Activated B cell treated with CpG ODN at 0.5 μM for 24 hours (primary cell): ENCODE measurements at regions of chr22 and their contacts with region 1.

Region 1: GRCh38 chr22:37862570-37863325 is 13.5 kb downstream of the EIF3L start:
- DNase-seq: no peak
- ATAC-seq: no peak
- H3K4me3 Mint-ChIP-seq: no peak overlapping the region
- H3K27ac Mint-ChIP-seq: no peak overlapping the region
- H3K4me1 Mint-ChIP-seq: no peaks in the 10 kb centered on the region
- H3K27me3 Mint-ChIP-seq: no peaks in the 10 kb centered on the region
- CTCF ChIP-seq: no peak

Region 2: DNA sequence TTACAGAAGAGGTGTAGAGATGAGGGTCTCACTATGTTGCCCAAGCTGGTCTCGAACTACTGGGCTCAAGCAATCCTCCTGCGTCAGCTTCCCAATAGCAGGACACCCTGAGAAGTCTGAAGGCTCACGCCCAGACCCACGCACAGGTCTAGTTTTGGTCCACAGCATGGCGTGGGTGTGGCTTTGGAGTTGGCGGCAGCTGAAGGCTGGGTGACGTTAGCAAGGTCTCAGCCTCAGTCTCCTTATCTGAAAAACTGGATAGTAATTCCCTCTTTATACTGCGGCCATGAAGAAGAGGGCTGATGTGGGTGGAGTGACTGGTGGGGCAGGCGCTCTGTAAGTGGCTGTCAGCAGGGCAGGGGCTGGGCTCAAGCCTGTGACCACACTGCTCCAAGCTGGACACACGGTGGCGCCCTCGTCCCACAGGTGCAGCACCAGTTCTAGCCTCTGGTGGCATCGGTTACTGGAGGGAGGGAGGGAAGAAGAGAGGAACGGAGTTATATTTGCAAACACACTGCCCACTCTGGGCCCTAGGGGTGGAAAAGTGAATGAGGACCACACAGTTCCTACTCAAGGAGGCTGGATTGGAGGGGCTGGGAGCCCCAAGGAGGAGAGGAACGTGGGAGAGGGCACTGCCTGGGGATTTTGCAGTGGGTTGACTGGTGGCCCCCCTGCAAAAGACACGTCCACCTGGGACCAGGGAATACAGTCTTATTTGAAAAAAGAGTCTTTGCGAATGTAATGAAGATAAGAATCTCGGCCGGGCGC is 324.0 kb before region 1 on chr22:
- CTCF ChIA-PET with region 1: no interaction called
- POLR2A ChIA-PET with region 1: no interaction called
- intact Hi-C with region 1: loop called (anchors 2 kb)
- DNase-seq: peak; percentile 81
- ATAC-seq: peak; percentile 100
- H3K4me3 Mint-ChIP-seq: peak overlapping the region; percentile 24
- H3K27ac Mint-ChIP-seq: peak overlapping the region; percentile 41
- H3K4me1 Mint-ChIP-seq: peaks cover 28% of the 10 kb centered on the region
- H3K27me3 Mint-ChIP-seq: peaks cover 21% of the 10 kb centered on the region
- CTCF ChIP-seq: peak; percentile 74

Region 3: DNA sequence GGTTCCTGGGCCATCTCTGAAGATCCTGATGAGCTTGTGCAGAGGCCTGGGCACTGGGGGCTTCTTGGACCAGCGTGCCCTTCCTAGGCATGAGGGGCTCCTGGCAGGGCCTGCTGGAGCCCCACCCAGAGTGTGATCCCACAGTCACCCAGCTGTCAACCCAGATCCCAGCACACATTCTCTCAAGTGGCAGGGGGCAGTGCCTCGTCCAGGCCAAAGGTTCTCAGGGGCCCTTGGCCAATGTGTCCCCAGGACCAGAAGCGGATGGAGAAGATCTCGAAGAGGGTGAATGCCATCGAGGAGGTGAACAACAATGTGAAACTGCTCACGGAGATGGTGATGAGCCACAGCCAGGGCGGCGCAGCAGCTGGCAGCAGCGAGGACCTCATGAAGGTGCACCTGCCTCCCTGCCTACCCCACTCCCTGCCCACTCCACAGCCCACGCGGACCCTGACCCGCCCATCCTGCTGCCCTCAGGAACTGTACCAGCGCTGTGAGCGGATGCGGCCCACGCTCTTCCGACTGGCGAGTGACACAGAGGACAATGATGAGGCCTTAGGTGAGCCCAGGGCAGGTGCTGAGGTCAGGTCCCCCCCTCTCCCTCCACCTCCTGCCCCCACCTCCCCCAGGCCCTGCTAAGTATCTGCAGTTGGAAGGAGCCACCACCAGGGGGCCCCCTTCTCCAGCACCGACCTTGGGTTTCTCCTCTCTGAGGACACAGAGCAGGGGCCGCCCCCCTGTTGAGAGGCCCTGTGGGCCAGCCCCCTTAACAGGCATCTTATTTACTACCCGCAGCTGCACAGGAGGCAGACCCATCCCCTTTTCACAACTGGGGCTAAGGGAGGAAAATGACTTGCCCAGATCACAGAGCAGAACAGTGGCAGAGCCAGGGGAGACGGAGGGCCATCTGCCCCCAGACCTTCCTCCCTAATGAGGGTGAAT is 239.4 kb before region 1 on chr22:
- CTCF ChIA-PET with region 1: interaction called, 4 read pairs
- POLR2A ChIA-PET with region 1: no interaction called
- intact Hi-C with region 1: loop called (anchors 1 kb)
- DNase-seq: peak; percentile 73
- ATAC-seq: peak; percentile 80
- H3K4me3 Mint-ChIP-seq: peak overlapping the region; percentile 24
- H3K27ac Mint-ChIP-seq: peak overlapping the region; percentile 84
- H3K4me1 Mint-ChIP-seq: peaks cover 64% of the 10 kb centered on the region
- H3K27me3 Mint-ChIP-seq: no peaks in the 10 kb centered on the region
- CTCF ChIP-seq: peak; percentile 38

Region 4: DNA sequence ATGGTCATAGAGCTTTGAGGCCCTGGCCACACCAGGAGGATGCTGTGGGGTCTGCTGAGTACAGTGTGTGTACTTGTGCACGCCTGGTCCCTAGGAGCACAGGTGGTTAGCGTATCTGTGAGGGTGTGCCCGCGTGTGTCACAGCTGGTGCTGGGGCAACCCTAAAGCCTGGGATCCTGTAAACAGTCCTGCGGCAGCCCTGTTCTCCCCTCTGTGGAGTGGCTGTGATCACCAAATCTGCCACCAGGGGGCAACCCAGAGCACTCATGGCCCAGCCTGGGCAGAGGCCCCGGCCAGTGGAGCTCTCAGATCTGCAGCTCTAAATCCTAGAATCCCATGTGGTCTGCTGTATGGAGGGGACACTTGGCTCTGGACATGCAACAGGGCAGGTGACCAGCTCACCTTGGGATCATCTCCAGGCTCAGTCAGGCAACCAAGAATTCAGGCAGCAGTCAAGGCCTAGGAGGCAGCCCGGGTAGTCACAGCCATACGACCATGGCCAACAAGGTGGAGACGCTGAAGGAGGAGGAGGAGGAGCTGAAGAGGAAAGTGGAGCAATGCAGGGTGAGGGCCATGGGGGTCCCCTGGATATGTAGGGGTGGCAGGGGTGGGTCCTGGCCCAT is 219.4 kb before region 1 on chr22:
- CTCF ChIA-PET with region 1: interaction called, 14 read pairs
- POLR2A ChIA-PET with region 1: no interaction called
- intact Hi-C with region 1: no loop called
- DNase-seq: peak; percentile 85
- ATAC-seq: peak; percentile 80
- H3K4me3 Mint-ChIP-seq: peak overlapping the region; percentile 28
- H3K27ac Mint-ChIP-seq: peak overlapping the region; percentile 59
- H3K4me1 Mint-ChIP-seq: peaks cover 34% of the 10 kb centered on the region
- H3K27me3 Mint-ChIP-seq: no peaks in the 10 kb centered on the region
- CTCF ChIP-seq: peak; percentile 64

Region 5: GRCh38 chr22:37843741-37843990 is 19.1 kb before region 1 on chr22:
- CTCF ChIA-PET with region 1: interaction called, 11 read pairs
- POLR2A ChIA-PET with region 1: no interaction called
- intact Hi-C with region 1: loop called (anchors 1 kb)
- DNase-seq: no peak
- ATAC-seq: peak; percentile 23
- H3K4me3 Mint-ChIP-seq: peak overlapping the region; percentile 89
- H3K27ac Mint-ChIP-seq: peak overlapping the region; percentile 85
- H3K4me1 Mint-ChIP-seq: peaks cover 25% of the 10 kb centered on the region
- H3K27me3 Mint-ChIP-seq: no peaks in the 10 kb centered on the region
- CTCF ChIP-seq: no peak

Region 6: DNA sequence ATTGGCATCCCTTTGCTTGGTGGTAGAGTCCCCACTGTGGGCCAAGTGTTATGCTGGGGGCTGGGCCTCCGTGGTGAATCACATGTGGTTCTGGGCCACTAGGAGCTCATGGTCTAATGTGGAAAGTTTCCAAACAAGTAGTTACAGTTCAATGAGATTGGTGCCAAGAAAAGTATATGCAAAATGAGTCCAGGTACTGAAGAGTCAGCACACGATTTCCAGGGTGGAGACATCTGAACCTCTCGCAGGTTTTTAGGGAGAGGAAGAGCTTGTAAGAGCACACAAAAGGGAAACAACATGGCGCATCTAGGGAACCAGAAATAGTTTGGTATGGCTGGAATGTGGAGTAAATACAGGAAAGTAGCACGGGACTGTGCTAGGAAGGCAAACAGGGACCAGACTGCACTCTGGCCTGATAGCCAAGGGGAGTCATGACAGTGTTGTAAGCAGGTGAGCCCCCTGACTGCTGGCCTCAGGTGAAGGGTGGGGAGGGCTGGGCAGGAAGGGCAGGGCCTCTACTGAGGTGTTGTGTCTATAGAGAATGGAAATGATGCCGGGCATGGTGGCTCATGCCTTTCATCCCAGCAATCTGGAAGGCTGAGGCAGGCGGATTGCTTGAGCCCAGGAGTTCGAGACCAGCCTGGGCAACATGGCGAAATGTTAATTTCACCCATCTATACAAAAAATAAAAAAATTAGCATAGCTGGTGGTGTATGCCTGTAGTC is 103.4 kb after region 1 on chr22:
- CTCF ChIA-PET with region 1: interaction called, 4 read pairs
- POLR2A ChIA-PET with region 1: no interaction called
- intact Hi-C with region 1: loop called (anchors 1 kb)
- DNase-seq: no peak
- ATAC-seq: no peak
- H3K4me3 Mint-ChIP-seq: no peak overlapping the region
- H3K27ac Mint-ChIP-seq: no peak overlapping the region
- H3K4me1 Mint-ChIP-seq: no peaks in the 10 kb centered on the region
- H3K27me3 Mint-ChIP-seq: no peaks in the 10 kb centered on the region
- CTCF ChIP-seq: no peak

Region 7: DNA sequence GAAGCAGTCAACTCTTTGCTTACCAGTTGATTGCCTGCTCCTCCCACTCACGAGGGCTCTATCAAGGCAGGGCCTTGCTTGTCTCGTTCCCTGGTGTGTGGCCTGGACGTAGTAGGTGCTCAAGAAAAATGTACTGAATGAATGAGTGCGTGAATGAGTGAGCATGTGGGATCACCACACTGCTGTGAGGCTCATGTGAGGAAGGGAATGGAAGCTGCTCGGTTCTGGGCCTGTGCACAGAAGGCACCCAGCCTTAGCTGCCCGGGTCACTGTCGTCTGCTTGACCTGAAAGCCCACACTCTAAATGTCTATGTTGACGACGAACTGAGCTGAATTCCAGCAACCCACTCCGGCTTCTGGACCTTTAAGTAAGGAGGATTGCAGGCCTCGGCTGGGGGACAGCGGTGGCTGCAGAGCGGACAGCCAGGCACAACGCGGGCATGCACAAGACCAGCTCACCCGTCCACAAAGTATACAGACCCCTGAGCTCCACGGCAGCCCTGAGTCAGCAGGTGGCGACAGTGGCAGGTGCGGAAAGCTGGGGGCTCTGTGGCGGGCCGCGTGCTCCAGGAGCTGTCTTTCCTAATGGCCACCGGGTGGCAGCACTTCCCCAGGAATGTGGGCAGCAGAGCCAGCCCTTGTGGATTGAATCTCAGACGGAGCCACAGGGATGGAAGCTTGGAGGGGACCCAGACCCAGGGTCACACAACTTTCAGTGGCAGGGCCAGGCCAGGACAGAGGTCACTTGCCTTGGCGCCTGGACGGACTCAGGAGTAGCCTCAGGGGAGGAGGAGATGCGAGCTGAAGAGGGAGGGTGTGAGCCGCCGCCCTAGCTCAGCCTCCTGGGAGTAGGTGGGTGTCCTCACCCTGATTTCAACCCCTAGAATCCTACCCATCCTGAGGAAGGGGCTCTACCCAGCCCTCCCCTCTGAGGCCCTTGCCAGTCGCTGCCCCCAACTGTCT is 189.4 kb after region 1 on chr22:
- CTCF ChIA-PET with region 1: no interaction called
- POLR2A ChIA-PET with region 1: no interaction called
- intact Hi-C with region 1: no loop called
- DNase-seq: peak; percentile 75
- ATAC-seq: peak; percentile 87
- H3K4me3 Mint-ChIP-seq: no peak overlapping the region
- H3K27ac Mint-ChIP-seq: no peak overlapping the region
- H3K4me1 Mint-ChIP-seq: peaks cover 14% of the 10 kb centered on the region
- H3K27me3 Mint-ChIP-seq: peaks cover 13% of the 10 kb centered on the region
- CTCF ChIP-seq: peak; percentile 75

Region 8: DNA sequence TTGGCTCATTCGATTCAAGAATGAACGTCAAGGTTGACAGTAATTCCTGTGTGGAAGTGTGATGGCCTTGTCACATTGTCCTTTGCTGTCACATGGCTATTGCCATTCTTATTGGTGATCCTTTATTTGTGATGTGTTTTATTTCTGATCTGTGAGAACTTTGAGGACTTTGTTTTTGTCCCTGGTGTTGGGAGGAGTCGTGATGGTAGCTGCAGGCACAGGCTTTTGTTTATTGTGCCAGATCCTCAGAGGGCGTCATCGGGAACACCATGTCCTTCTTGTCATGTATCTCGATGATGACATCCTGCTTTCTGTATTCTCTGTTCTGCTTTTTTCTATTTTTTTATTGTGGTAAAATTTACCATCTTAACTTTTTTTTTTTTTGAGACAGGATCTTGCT is 200.0 kb after region 1 on chr22:
- CTCF ChIA-PET with region 1: no interaction called
- POLR2A ChIA-PET with region 1: no interaction called
- intact Hi-C with region 1: no loop called
- DNase-seq: no peak
- ATAC-seq: no peak
- H3K4me3 Mint-ChIP-seq: no peak overlapping the region
- H3K27ac Mint-ChIP-seq: no peak overlapping the region
- H3K4me1 Mint-ChIP-seq: peaks cover 10% of the 10 kb centered on the region
- H3K27me3 Mint-ChIP-seq: no peaks in the 10 kb centered on the region
- CTCF ChIP-seq: no peak